ENCODE measurements at regions of chr7 and their contacts with region 1.

Region 1: GRCh38 chr7:4675771-4676367 is 6.2 kb upstream of the FOXK1 start:
- DNase-seq: no peak
- ATAC-seq: peak in 1 of 4 donors; percentile 77
- H3K4me3 ChIP-seq: no peak overlapping the region
- H3K27ac ChIP-seq: no peak overlapping the region
- H3K4me1 ChIP-seq: no peaks in the 10 kb centered on the region
- H3K27me3 ChIP-seq: no peaks in the 10 kb centered on the region
- CTCF ChIP-seq: no peak

Region 2: GRCh38 chr7:4641667-4642467 is 34.0 kb before region 1 on chr7:
- intact Hi-C with region 1: loop called in 2 of 3 experiments (anchors 5 kb)
- DNase-seq: peak; percentile 91 to 99 (median 98)
- ATAC-seq: peak; percentile 96 to 97 (median 97)
- H3K4me3 ChIP-seq: peak overlapping the region; percentile 14 to 63 (median 47)
- H3K27ac ChIP-seq: peak overlapping the region; percentile 76 to 91 (median 84)
- H3K4me1 ChIP-seq: no peaks in the 10 kb centered on the region
- H3K27me3 ChIP-seq: no peaks in the 10 kb centered on the region
- CTCF ChIP-seq: no peak